HEK293 (cell line): ENCODE measurements at regions of chr5 and their contacts with region 1.

Region 1: GRCh38 chr5:177425801-177426565 is 493 bp upstream of the GRK6 start:
- H3K4me3 ChIP-seq: peak overlapping the region; percentile 68
- H3K27ac ChIP-seq: peak overlapping the region; percentile 62
- H3K4me1 ChIP-seq: no peaks in the 10 kb centered on the region
- CTCF ChIP-seq: no peak

Region 2: DNA sequence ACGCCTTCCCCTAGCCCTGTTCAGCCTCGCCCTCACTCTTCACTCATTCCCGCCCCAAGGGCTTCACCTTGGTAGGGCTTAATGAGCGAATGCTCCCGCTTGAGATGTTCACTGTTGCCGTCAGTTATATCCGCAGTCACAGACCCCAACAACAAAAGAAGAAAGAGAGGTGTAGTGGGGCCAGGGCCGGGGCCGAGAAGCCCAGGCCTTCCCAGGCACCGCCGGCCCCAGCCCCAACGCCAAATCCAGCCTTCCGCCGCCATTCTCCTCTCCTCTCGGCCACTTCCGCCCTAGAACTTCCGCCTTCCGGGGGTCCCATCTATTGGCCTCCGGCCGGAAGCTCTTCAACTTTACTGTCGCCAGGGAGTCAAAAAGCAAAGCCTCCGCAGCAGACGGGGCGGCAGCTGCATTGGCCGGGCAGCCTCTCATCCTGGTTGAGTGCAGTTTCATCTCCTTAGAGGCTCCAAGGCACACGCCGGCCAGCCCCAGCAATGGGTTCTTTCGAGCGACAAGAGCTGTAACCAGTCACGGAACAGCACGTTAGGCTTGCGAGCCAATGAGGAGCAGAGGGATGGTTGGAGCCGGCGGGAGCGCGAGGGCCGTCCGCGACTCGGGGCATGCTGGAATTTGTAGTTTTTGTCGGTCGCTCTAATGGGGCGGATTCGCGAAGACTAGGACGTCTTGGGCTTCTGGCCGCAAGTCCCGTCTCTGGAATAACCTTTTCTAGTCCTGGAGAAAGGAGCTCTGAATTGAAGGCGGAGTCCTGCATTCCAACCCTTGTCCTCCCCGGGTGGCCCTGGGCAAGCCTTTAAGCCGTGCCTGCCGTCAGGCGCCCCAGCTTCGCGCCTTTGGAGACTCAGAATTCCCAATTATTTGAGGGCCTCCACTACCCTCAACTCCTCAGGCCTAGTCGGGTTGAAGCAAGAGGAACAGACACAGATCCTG is 74.3 kb before region 1 on chr5 and contains the start of gene LMAN2:
- CTCF ChIA-PET with region 1: interaction called, 3 read pairs
- POLR2A ChIA-PET with region 1: interaction called, 10 read pairs
- H3K4me3 ChIP-seq: peak within 1 kb of the TSS; percentile 61
- H3K27ac ChIP-seq: peak within 1 kb of the TSS; percentile 92
- H3K4me1 ChIP-seq: peaks cover 20% of the 10 kb centered on the region; the same call in 1 of the 2 replicates
- CTCF ChIP-seq: no peak

Region 3: DNA sequence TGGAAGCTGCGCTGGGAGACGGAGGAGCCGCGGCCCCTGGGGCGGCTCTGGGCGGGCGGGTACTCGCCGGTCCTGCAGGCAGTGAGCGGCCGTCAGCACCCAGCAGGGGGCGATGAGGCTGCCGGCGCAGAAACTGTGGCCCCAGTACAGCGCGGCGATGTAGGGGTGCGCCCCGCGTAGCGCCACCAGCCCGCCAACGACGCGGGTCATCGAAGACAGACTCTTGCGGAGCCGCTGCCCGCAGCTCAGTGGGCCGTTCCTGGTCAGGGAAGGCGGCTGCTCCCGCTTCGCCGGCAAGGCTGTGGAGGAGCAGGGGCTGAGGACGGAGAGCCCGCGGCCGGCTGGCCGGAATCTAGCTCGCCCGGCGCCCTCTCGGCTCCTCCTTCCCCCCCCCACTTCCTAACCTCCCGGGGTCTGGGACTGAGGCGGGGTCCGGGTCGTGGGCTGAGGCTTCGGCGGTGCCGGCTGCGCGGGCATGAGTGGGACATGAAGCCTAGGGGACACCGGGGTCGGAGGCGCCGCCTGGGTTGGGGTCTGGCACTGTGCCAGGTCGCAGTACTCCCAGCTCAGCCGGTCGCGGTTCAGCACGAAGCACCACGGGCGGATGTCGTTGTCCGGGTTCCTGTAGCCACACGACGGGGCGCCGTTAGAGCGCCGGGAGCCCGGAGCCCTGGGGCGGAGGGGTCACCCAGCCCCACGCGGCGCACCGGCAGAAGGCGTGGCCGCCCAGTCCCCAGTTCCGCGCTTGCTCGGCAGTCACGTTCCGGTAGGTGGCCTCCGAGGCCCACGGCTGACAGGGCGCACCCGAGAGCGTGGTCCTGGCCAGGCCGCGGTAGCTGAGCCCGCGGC is 22.0 kb before region 1 on chr5:
- CTCF ChIA-PET with region 1: interaction called, 40 read pairs
- POLR2A ChIA-PET with region 1: interaction called, 45 read pairs
- H3K4me3 ChIP-seq: peak overlapping the region; percentile 50
- H3K27ac ChIP-seq: peak overlapping the region; percentile 56; the same call in 1 of the 2 replicates
- H3K4me1 ChIP-seq: no peaks in the 10 kb centered on the region
- CTCF ChIP-seq: peak; percentile 97

Region 4: DNA sequence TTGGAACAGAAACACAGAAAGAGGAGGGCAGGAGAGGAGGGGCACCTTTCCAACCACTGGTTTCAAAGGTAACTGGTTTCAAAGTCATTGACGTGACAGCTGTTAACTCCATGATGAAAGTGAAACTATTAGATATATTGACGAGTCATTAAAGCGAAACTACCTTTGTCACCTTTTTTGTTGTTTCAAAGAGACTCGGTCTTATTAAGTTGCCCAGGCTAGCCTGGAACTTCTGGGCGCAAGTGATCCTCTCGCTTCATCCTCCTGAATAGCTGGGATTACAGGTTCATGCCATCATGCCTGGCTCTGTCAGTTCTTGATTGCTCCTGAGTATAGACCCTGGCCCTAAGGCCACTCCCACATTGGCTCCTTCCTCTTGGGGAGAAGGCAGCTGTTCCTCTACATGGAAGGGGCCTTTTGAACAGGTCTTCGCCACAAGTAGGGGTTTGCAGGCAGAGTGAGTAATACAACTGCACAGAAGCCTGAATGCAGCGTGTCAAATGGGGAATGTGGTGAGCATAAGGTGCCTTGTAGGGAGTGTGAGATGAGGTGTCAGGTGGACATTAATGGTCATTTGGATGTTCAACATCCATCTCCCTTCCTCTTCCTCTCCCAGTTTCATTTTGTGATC is 13.3 kb before region 1 on chr5:
- CTCF ChIA-PET with region 1: interaction called, 5 read pairs
- POLR2A ChIA-PET with region 1: interaction called, 12 read pairs
- H3K4me3 ChIP-seq: no peak overlapping the region
- H3K27ac ChIP-seq: no peak overlapping the region
- H3K4me1 ChIP-seq: no peaks in the 10 kb centered on the region
- CTCF ChIP-seq: no peak

Region 5: GRCh38 chr5:177437623-177438022 is 11.6 kb after region 1 on chr5:
- CTCF ChIA-PET with region 1: no interaction called
- POLR2A ChIA-PET with region 1: interaction called, 35 read pairs
- H3K4me3 ChIP-seq: no peak overlapping the region
- H3K27ac ChIP-seq: no peak overlapping the region
- H3K4me1 ChIP-seq: no peaks in the 10 kb centered on the region
- CTCF ChIP-seq: no peak

Region 6: DNA sequence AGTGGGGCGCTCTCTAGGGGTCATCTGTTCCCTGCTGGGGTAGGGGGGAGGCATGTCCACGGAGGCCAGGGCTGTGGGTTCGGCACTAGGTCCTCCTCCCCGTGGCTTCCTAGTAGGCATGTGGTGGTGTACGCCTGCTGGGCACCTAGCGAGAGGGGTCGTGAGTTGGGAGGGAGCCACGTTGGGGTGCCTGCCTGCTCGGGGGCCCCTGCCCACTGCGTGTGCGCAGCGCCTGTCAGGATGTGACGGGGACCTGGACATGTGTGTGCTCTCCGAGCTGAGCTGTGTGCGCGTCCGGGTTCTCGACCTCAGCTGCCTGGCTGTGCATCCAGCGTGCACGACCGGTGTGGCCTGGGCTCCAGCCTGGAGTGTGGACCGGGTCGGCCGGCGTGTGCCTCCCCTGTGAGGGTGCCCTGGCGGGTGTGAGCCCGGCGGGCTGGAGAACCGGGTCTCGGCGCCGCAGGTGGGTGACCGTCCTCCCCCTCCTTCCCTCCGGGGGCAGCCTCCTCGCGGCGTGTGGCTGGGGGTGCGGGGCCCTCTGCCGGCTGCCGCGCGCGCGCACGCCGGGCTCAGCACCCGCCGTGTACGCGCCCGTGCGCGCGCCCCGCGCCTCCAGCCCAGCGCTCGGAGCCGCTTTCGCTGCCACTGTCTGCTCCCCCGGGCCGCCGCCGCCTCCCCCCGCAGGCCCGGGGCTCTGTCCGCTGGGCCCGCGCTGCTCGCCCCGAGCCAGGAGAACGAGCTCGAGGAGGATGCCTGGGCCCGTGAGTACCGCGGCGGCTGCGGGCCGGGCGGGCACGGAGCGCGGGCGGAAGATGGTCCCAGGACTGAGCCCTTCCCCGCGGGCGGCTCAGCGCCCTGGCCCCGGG is 20.4 kb after region 1 on chr5 and contains the start of gene PRR7:
- CTCF ChIA-PET with region 1: interaction called, 3 read pairs
- POLR2A ChIA-PET with region 1: interaction called, 21 read pairs
- H3K4me3 ChIP-seq: peak within 1 kb of the TSS; percentile 54
- H3K27ac ChIP-seq: peak within 1 kb of the TSS; percentile 60; the same call in 1 of the 2 replicates
- H3K4me1 ChIP-seq: no peaks in the 10 kb centered on the region
- CTCF ChIP-seq: peak; percentile 72